Left colon (tissue), 2 donors: ENCODE measurements at regions of chr9 and their contacts with region 1.

Region 1: GRCh38 chr9:120936011-120936763 is 9.6 kb upstream of the TRAF1 start:
- DNase-seq: peak; percentile 91 to 99
- ATAC-seq: peak; percentile 87

Region 2: DNA sequence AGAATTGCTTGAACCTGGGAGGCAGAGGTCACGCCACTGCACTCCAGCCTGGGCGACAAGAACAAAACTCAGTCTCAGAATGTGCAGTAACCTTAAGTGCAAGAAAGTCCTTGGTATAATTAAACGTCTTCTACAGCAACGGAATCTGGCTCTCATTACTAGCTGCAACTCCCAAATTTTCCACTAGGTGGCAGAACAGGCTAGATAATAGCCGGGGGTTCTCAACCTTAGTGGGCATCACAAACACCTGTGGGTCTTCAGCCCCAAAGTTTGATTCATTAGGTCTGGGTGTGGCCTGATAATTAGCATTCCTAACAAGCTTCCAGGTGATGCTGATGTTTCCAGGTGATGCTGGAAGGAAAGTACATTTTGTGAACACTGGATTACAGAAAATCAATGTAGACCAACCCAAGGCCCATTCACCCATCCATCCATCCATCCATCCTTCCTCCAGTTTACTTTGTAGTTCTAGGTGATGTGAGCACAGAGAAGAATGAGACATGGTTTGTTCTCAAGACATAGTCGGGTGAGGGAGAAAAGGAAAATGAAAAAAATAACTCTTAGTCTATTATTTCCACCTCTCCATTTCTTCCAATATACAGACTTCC is 180.3 kb before region 1 on chr9:
- intact Hi-C with region 1: loop called in 1 of 2 experiments (anchors 10 kb)
- DNase-seq: peak in 1 of 2 donors; percentile 50
- ATAC-seq: peak; percentile 64

Region 3: DNA sequence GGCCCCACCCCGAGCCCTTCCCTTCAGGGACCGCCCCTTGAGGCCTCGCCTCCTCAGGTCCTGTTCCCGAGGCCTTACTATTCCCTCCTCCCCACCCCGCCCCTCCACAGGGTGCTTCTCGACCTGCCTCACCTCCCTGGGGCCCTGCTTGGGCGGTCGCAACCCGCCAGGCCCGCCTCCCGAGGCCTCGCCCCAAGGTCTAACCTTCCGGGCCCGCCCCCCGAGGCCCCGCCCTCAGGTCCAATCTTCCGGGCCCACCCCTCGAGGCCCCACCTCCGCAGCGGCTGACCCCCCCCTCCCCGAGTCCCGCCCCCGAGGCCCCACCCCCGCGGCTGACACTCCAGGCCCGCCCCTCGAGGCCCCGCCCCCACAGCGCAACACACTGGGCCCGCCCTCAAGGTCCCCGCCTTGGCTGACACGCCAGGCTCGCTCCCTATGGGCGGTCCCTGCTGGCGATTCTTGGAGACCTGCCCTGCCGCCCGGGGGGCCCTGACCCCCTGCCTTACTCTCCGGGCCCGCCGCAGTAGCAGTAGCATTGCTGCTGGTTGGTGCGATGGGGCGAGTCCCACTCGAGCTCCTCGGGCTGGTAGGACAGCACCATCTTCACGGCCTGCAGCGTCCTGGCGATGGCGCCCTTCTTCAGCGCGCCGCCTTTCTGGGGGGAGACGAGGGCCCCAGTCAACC is 67.4 kb before region 1 on chr9:
- intact Hi-C with region 1: loop called in 1 of 2 experiments (anchors 5 kb)
- DNase-seq: peak; percentile 99 to 100
- ATAC-seq: peak; percentile 94